Activated naive CD4-positive, alpha-beta T cell treated with anti-CD3 and anti-CD28 coated beads for 36 hours (primary cell): ENCODE measurements at regions of chr13 and their contacts with region 1.

Region 1: GRCh38 chr13:73677048-73677601 is 457.1 kb downstream of the KLF12 start:
- DNase-seq: no peak
- H3K4me3 Mint-ChIP-seq: no peak overlapping the region
- H3K27ac Mint-ChIP-seq: no peak overlapping the region
- H3K4me1 Mint-ChIP-seq: no peaks in the 10 kb centered on the region
- H3K27me3 Mint-ChIP-seq: no peaks in the 10 kb centered on the region

Region 2: DNA sequence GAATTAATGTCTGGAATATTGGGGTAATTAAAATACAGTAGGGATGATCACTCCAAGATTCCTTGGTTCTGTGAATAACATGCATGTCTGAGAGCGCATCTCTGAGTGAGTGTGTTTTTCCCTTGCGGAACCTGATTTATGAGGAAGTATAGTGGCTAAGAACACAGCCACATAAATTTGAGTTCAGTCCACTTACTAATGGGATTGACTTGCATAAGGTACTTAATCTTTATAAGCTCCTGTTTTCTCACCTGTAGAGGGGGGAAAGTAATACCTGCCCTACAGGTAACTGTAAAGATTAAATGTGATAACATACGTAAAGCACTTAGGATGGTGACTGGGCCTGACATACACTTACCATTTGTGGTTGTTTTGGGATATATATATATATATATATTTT is 557.5 kb before region 1 on chr13:
- CTCF ChIA-PET with region 1: interaction called, 11 read pairs
- intact Hi-C with region 1: no loop called
- DNase-seq: no peak
- H3K4me3 Mint-ChIP-seq: no peak overlapping the region
- H3K27ac Mint-ChIP-seq: no peak overlapping the region
- H3K4me1 Mint-ChIP-seq: no peaks in the 10 kb centered on the region
- H3K27me3 Mint-ChIP-seq: no peaks in the 10 kb centered on the region

Region 3: DNA sequence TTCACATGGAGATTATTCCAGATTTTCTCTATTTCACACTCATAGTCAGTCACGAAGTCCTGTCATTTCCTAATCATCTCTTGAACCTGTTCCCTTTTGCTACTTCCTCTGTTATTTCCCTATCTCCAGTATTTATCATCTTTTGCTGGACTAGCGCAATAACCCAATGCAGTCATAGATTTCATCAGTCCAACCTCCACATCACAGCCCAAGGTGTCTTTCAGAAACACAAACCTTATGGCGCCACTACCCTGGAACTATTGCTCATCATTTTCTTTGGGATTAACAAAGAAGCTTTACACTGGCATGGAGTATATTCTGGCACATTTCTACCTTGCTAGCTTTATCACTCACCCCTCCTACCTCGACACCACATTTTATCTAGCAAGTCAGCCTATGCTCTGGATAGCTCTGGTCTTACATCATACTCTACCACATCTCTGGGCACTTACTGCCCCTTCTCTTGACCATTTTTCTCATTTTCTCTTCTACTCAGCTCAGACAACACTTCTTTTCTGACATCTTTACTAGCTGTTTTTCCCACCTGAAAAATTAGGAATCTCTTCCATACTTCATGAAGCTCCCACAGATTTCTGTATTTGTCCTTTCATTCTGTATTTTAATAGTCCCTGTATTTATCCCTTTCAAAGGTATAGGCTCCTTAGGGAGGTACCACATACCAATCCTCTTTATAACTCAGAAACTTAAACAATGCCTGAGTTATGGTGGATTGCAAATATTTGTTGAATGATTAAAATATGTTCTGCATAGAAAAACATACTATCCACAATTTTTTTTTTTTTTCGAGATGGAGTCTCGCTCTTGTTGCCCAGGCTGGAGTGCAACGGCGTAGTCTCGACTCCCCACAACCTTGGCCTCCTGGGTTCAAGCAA is 77.6 kb before region 1 on chr13:
- CTCF ChIA-PET with region 1: interaction called, 12 read pairs
- intact Hi-C with region 1: no loop called
- DNase-seq: no peak
- H3K4me3 Mint-ChIP-seq: no peak overlapping the region
- H3K27ac Mint-ChIP-seq: no peak overlapping the region
- H3K4me1 Mint-ChIP-seq: peaks cover 9% of the 10 kb centered on the region
- H3K27me3 Mint-ChIP-seq: no peaks in the 10 kb centered on the region